HepG2 (cell line): ENCODE measurements at regions of chr6 and their contacts with region 1.

Region 1: GRCh38 chr6:92647625-92648024 is 771.7 kb downstream of the EPHA7 start:
- DNase-seq: peak; percentile 25
- ATAC-seq: peak; percentile 50; the same call in 2 of the 3 replicates
- H3K4me3 ChIP-seq: no peak overlapping the region
- H3K27ac ChIP-seq: no peak overlapping the region
- H3K4me1 ChIP-seq: no peaks in the 10 kb centered on the region
- H3K27me3 ChIP-seq: no peaks in the 10 kb centered on the region
- CTCF ChIP-seq: no peak
- EP300 ChIP-seq: no peak
- POLR2A ChIP-seq: no peak
- RAD21 ChIP-seq: no peak

Region 2: GRCh38 chr6:90940812-90941481 is 1706.7 kb before region 1 on chr6:
- CTCF ChIA-PET with region 1: no interaction called
- POLR2A ChIA-PET with region 1: no interaction called
- in situ Hi-C with region 1: no loop called
- intact Hi-C with region 1: loop called (anchors 1 kb)
- DNase-seq: peak; percentile 44
- ATAC-seq: peak; percentile 85
- H3K4me3 ChIP-seq: no peak overlapping the region
- H3K27ac ChIP-seq: no peak overlapping the region
- H3K4me1 ChIP-seq: no peaks in the 10 kb centered on the region
- H3K27me3 ChIP-seq: no peaks in the 10 kb centered on the region; a peak in 2 of 5 replicates
- CTCF ChIP-seq: peak; percentile 69
- EP300 ChIP-seq: no peak
- POLR2A ChIP-seq: no peak
- RAD21 ChIP-seq: peak; percentile 49

Region 3: DNA sequence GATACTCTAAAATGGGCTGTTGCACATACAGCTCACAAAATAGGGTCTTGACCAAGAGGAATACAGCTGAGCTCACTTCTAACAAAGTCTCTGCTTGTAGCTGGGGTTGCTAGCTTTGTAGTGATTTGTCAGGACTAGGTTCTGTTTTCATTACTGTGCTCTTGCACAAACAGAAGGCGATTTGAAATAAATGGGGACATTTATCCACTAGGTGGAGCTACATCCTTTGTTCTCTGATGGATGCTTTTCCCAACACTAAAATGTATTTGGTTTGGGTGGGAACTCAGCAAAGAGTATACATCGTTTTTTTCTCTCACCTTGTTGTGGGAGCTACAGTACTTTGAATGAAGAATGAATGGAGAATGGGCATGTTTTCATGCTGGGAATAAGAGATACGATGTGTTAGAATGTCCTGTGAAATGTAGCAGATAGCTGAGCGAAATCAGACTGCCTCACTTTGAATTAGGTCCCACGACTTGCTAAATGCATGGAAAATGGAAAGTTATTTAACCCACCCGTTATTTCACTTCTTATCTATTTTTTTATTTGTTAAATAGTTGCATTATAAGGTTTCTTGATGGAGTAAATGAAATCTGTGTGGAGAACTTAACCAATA is 1566.1 kb before region 1 on chr6:
- CTCF ChIA-PET with region 1: interaction called, 5 read pairs
- POLR2A ChIA-PET with region 1: no interaction called
- in situ Hi-C with region 1: loop called (anchors 25 kb)
- intact Hi-C with region 1: no loop called
- DNase-seq: peak; percentile 25
- ATAC-seq: peak; percentile 76
- H3K4me3 ChIP-seq: no peak overlapping the region
- H3K27ac ChIP-seq: no peak overlapping the region
- H3K4me1 ChIP-seq: no peaks in the 10 kb centered on the region
- H3K27me3 ChIP-seq: no peaks in the 10 kb centered on the region
- CTCF ChIP-seq: peak; percentile 76
- EP300 ChIP-seq: no peak
- POLR2A ChIP-seq: no peak
- RAD21 ChIP-seq: peak; percentile 45; the same call in 1 of the 2 replicates

Region 4: GRCh38 chr6:92122746-92123145 is 524.9 kb before region 1 on chr6:
- CTCF ChIA-PET with region 1: interaction called, 10 read pairs
- POLR2A ChIA-PET with region 1: no interaction called
- in situ Hi-C with region 1: loop called (anchors 10 kb)
- intact Hi-C with region 1: loop called (anchors 1 kb)
- DNase-seq: peak; percentile 11
- ATAC-seq: peak; percentile 63; the same call in 2 of the 3 replicates
- H3K4me3 ChIP-seq: no peak overlapping the region
- H3K27ac ChIP-seq: no peak overlapping the region
- H3K4me1 ChIP-seq: no peaks in the 10 kb centered on the region
- H3K27me3 ChIP-seq: no peaks in the 10 kb centered on the region
- CTCF ChIP-seq: peak; percentile 41
- EP300 ChIP-seq: no peak
- POLR2A ChIP-seq: no peak
- RAD21 ChIP-seq: no peak

Region 5: DNA sequence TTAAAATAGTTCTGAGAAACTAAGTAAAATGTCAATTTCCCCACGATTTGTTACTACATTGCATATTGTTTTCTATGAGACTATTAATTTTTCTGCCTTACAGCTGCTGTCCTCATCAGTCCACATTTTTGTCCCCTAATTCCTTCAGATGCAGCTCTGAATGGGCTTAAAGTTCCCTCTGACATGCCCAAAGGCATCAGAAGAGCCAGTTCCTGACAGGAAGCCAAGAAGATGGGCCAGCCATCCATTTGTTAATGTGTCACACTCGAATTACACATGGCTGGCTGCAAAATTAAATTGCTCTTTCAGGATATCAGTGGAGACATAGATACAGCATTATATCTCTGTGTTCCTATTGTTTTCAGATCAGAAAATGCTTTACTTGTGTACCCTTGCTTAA is 451.3 kb before region 1 on chr6:
- CTCF ChIA-PET with region 1: no interaction called
- POLR2A ChIA-PET with region 1: no interaction called
- in situ Hi-C with region 1: no loop called
- intact Hi-C with region 1: loop called (anchors 1 kb)
- DNase-seq: no peak
- ATAC-seq: no peak
- H3K4me3 ChIP-seq: no peak overlapping the region
- H3K27ac ChIP-seq: no peak overlapping the region
- H3K4me1 ChIP-seq: no peaks in the 10 kb centered on the region
- H3K27me3 ChIP-seq: no peaks in the 10 kb centered on the region
- CTCF ChIP-seq: no peak
- EP300 ChIP-seq: no peak
- POLR2A ChIP-seq: no peak
- RAD21 ChIP-seq: no peak

Region 6: DNA sequence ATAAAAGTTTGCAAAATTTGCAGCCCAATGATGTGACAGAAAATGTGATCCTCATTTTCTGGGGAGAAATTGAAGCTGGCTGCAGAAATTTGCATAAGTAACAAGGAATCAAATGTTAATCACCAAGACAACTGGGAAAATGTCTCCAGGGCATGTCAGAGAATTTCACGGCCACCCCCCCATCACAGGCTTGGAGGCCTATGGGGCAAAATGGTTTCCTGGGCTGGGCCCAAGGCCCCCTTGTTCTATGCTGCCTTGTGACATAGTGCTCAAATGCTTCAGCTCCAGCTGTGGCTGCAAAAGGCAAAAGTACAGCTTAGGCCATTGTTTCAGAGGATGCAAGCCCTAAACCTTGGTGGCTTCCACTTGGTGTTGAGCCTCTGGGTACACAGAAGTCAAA is 430.9 kb before region 1 on chr6:
- CTCF ChIA-PET with region 1: no interaction called
- POLR2A ChIA-PET with region 1: no interaction called
- in situ Hi-C with region 1: no loop called
- intact Hi-C with region 1: no loop called
- DNase-seq: no peak
- ATAC-seq: no peak
- H3K4me3 ChIP-seq: no peak overlapping the region
- H3K27ac ChIP-seq: no peak overlapping the region
- H3K4me1 ChIP-seq: no peaks in the 10 kb centered on the region
- H3K27me3 ChIP-seq: no peaks in the 10 kb centered on the region
- CTCF ChIP-seq: no peak
- EP300 ChIP-seq: no peak
- POLR2A ChIP-seq: no peak
- RAD21 ChIP-seq: no peak

Region 7: DNA sequence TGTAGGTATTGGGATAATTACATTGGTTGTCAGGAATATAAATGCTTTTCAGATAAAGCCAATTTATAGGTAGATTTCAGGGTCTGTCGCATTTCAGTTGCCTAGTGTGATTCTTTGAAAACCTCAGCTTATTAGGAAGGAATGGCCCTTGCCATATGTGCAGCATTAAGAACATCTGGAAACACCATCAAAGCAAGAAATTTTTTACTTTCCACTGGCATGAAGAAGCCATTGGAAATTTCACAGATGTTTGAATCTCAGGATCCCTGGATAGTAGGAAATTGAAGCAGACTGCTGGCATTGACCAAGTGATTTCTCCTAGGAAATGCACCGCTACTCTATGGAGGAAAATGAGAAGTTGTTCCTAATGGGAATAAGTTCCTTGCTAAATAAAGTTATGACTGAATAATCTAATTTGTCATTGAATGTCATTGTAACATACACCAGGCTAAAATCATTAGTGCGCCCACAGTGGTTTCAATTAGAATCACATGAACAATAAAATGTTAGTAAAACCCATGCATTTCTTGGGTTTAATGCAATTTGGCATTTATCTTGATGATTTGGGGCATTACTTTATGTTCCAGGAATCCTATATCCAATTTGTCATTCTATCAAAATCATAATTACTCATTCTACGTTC is 178.3 kb before region 1 on chr6:
- CTCF ChIA-PET with region 1: no interaction called
- POLR2A ChIA-PET with region 1: no interaction called
- in situ Hi-C with region 1: no loop called
- intact Hi-C with region 1: no loop called
- DNase-seq: no peak
- ATAC-seq: no peak
- H3K4me3 ChIP-seq: no peak overlapping the region
- H3K27ac ChIP-seq: no peak overlapping the region
- H3K4me1 ChIP-seq: no peaks in the 10 kb centered on the region
- H3K27me3 ChIP-seq: no peaks in the 10 kb centered on the region
- CTCF ChIP-seq: no peak
- EP300 ChIP-seq: no peak
- POLR2A ChIP-seq: no peak
- RAD21 ChIP-seq: no peak